IMR-90 (cell line): ENCODE measurements at regions of chr1 and their contacts with region 1.

Region 1: DNA sequence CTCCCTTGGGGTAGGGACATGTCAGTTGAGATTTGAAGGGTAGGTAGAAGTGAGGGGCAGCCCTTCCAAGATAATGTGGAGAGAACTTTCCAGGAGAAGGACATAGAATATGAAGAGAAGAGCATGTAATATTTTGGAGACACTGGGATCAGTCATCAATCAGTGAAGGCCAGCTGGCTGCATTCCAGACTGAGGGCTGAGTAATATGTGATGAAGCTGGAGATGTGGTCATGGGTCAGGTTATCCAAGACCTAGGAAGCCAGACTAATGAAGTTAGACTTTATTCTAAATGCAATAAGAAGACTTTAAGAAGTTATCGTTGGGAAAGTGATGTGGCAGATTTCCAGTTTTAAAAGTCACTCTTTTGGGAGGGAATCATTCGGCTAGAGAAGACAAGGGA is 262.0 kb downstream of the HMCN1 start:
- DNase-seq: peak; percentile 80
- ATAC-seq: peak; percentile 29; the same call in 1 of the 2 replicates
- H3K4me3 ChIP-seq: no peak overlapping the region
- H3K27ac ChIP-seq: no peak overlapping the region
- H3K4me1 ChIP-seq: no peaks in the 10 kb centered on the region
- H3K27me3 ChIP-seq: no peaks in the 10 kb centered on the region
- CTCF ChIP-seq: no peak
- POLR2A ChIP-seq: no peak
- RAD21 ChIP-seq: no peak

Region 2: GRCh38 chr1:184792450-184792969 is 1203.7 kb before region 1 on chr1:
- CTCF ChIA-PET with region 1: no interaction called
- POLR2A ChIA-PET with region 1: no interaction called
- dilution Hi-C with region 1: no loop called
- in situ Hi-C with region 1: no loop called
- intact Hi-C with region 1: no loop called
- DNase-seq: peak; percentile 99
- ATAC-seq: peak; percentile 94
- H3K4me3 ChIP-seq: no peak overlapping the region
- H3K27ac ChIP-seq: peak overlapping the region; percentile 67
- H3K4me1 ChIP-seq: peaks cover 9% of the 10 kb centered on the region
- H3K27me3 ChIP-seq: no peaks in the 10 kb centered on the region
- CTCF ChIP-seq: no peak
- POLR2A ChIP-seq: peak; percentile 58; the same call in 1 of the 2 replicates
- RAD21 ChIP-seq: peak; percentile 11; the same call in 1 of the 2 replicates

Region 3: GRCh38 chr1:186042216-186042615 is 46.0 kb after region 1 on chr1:
- CTCF ChIA-PET with region 1: interaction called, 3 read pairs
- POLR2A ChIA-PET with region 1: no interaction called
- dilution Hi-C with region 1: no loop called
- in situ Hi-C with region 1: no loop called
- intact Hi-C with region 1: loop called (anchors 10 kb)
- DNase-seq: no peak
- ATAC-seq: no peak
- H3K4me3 ChIP-seq: no peak overlapping the region
- H3K27ac ChIP-seq: no peak overlapping the region
- H3K4me1 ChIP-seq: no peaks in the 10 kb centered on the region
- H3K27me3 ChIP-seq: no peaks in the 10 kb centered on the region
- CTCF ChIP-seq: no peak
- POLR2A ChIP-seq: no peak
- RAD21 ChIP-seq: no peak